A673 (cell line): ENCODE measurements at regions of chr1 and their contacts with region 1.

Region 1: DNA sequence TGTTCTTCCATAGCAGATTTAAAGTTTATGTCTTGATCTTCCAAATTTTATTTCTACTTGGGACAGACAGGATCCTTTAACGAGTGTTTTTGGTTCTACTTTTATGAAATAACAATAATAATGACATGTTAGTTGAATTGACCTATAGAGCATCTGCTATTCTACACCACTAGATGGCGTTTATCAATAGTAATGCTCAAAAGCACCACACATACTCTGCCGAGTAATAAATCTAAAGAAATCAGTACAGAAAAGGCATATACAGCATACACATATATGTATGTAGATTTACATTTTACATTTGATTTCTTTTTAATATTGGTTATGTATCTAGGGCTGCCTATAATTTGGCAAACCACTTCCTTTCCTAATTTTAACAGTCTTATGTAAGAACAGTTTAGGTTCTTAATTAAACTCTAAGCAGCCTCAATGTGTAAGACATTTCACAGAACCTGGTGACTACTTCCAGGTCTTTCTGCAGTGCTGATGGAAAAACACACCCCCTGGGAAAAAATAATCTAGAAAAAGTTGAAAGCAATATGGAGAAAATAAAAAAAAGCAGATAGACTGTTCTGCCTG is 5.9 kb upstream of the SIPA1L2 start:
- DNase-seq: peak; percentile 68
- H3K4me3 ChIP-seq: no peak overlapping the region
- H3K27ac ChIP-seq: no peak overlapping the region
- H3K4me1 ChIP-seq: no peaks in the 10 kb centered on the region
- H3K27me3 ChIP-seq: no peaks in the 10 kb centered on the region
- CTCF ChIP-seq: peak; percentile 82

Region 2: GRCh38 chr1:232880354-232880753 is 244.5 kb after region 1 on chr1:
- CTCF ChIA-PET with region 1: no interaction called
- POLR2A ChIA-PET with region 1: no interaction called
- intact Hi-C with region 1: loop called (anchors 5 kb)
- DNase-seq: peak; percentile 61
- H3K4me3 ChIP-seq: no peak overlapping the region
- H3K27ac ChIP-seq: no peak overlapping the region
- H3K4me1 ChIP-seq: no peaks in the 10 kb centered on the region
- H3K27me3 ChIP-seq: no peaks in the 10 kb centered on the region
- CTCF ChIP-seq: peak; percentile 81

Region 3: DNA sequence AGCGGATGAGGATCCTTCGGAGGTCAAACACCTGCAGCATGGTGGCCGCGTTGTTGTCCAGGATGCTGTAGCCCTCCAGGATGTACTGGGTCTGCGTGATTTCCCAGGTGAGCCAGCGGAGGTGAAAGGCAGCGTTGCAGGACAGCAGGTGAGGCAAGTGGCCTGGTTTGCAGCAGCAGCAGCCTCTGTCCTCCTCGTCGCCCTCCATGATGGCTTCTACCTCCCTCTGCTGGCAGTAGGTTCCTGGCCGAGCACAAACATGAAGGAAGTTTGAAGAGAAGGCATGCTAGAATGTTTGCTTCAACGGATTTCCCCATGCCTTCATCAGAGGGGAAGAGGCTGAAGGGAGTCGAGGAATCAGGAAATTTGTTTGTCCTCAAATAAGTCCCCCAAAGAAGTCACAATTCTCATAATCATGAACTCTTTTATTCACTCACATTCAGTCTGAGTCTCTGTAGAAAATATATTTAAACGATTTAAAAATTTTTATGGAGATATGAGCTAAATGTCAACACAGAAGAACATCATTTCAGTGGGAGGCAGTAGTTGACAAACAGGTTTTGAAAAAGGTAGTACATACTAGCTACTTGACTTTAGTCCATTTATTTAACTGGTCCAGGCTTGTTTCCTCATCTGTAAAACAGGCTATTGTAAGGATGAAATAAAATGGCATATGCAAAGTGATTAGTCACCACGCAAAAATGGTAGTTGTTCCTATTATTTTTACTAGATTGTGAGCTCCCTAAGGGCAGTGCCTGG is 389.5 kb after region 1 on chr1:
- CTCF ChIA-PET with region 1: no interaction called
- POLR2A ChIA-PET with region 1: no interaction called
- intact Hi-C with region 1: loop called (anchors 2 kb)
- DNase-seq: peak; percentile 52
- H3K4me3 ChIP-seq: no peak overlapping the region
- H3K27ac ChIP-seq: no peak overlapping the region
- H3K4me1 ChIP-seq: peaks cover 8% of the 10 kb centered on the region
- H3K27me3 ChIP-seq: no peaks in the 10 kb centered on the region
- CTCF ChIP-seq: peak; percentile 66

Region 4: GRCh38 chr1:233172227-233172626 is 536.4 kb after region 1 on chr1:
- CTCF ChIA-PET with region 1: no interaction called
- POLR2A ChIA-PET with region 1: no interaction called
- intact Hi-C with region 1: loop called (anchors 1 kb)
- DNase-seq: peak; percentile 75
- H3K4me3 ChIP-seq: no peak overlapping the region
- H3K27ac ChIP-seq: no peak overlapping the region
- H3K4me1 ChIP-seq: no peaks in the 10 kb centered on the region
- H3K27me3 ChIP-seq: no peaks in the 10 kb centered on the region
- CTCF ChIP-seq: peak; percentile 61

Region 5: GRCh38 chr1:233240829-233241682 is 605.2 kb after region 1 on chr1:
- CTCF ChIA-PET with region 1: no interaction called
- POLR2A ChIA-PET with region 1: no interaction called
- intact Hi-C with region 1: loop called (anchors 1 kb)
- DNase-seq: peak; percentile 60
- H3K4me3 ChIP-seq: no peak overlapping the region
- H3K27ac ChIP-seq: no peak overlapping the region
- H3K4me1 ChIP-seq: peaks cover 6% of the 10 kb centered on the region
- H3K27me3 ChIP-seq: no peaks in the 10 kb centered on the region
- CTCF ChIP-seq: peak; percentile 84